AG04450 (cell line): ENCODE measurements at regions of chr3 and their contacts with region 1.

Region 1: GRCh38 chr3:114418724-114419543 is 125.1 kb downstream of the TIGIT start:
- DNase-seq: peak; percentile 87
- H3K4me3 ChIP-seq: no peak overlapping the region
- H3K27ac ChIP-seq: peak overlapping the region; percentile 42
- H3K27me3 ChIP-seq: no peaks in the 10 kb centered on the region
- CTCF ChIP-seq: peak; percentile 77

Region 2: DNA sequence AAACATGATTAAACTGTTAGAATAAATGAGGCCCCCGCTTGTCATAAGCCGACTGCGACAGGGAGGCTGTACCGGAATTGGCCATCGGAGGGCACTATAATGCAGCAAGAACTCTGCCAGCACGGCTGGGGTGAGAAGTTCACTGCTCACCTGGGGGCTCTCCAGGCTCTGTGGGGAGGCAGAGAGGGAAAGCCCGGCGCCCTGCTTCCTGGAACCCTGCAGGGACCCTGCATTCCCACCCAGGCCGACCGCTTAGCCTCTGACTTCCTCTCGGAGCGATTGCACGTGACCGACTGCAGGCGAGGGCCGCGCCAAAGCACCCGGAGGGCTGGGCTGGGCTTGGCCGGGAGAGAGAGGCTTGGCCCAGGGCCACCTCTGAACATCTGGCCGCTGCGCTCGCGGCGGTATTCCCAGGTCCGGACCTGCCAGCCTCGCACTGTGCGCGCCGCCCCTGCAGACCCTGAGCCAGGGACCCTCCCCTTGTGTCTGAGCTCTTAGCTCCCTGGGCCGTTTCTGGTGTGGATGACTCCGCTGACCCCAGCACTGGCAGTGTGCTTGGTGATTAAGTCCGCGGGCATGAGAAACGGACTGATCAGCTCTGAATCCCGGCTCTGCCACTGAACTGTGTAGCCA is 266.3 kb before region 1 on chr3:
- CTCF ChIA-PET with region 1: no interaction called
- POLR2A ChIA-PET with region 1: no interaction called
- DNase-seq: peak; percentile 26
- H3K4me3 ChIP-seq: peak overlapping the region; percentile 67
- H3K27ac ChIP-seq: peak overlapping the region; percentile 21
- H3K27me3 ChIP-seq: peaks cover 2% of the 10 kb centered on the region
- CTCF ChIP-seq: peak; percentile 96

Region 3: DNA sequence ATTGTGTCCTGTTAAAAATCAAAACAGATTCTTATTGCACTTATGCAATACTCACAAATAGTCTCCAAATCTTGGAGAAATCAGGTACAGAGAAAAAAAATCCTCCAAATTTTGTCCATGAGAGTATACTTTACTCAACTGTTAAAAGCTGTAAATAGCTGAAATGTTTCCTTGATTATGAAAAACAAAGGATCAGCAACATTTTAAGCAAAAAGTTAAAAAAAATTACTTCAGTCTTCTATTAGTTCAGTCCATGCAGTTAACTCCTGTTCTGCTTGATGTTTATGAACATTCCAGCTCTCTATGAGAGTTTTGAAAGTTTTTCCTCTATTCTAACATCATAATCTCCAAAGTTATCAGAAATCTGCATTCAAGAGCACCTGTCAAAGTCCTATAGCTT is 158.8 kb before region 1 on chr3:
- CTCF ChIA-PET with region 1: no interaction called
- POLR2A ChIA-PET with region 1: no interaction called
- DNase-seq: no peak
- H3K4me3 ChIP-seq: no peak overlapping the region
- H3K27ac ChIP-seq: no peak overlapping the region
- H3K27me3 ChIP-seq: no peaks in the 10 kb centered on the region
- CTCF ChIP-seq: no peak

Region 4: DNA sequence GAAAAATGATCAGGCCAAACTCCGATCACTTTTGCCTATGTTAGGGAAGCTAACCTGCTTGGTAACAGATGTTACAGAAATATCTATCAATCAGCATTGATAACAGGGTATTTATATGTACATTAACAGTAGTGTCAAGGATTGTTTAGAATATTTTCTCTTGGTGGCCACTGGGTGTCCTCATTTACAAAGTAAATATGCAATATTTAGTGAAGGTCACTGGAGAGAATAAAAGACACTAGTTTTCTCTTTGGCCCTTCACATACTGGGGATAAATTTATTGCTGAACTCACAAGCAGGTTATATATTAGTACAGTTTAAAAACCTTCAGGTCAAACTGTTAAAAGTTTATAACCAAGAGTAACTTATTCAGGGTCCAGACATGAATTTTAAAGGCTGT is 56.1 kb before region 1 on chr3:
- CTCF ChIA-PET with region 1: interaction called, 12 read pairs
- POLR2A ChIA-PET with region 1: no interaction called
- DNase-seq: no peak
- H3K4me3 ChIP-seq: no peak overlapping the region
- H3K27ac ChIP-seq: no peak overlapping the region
- H3K27me3 ChIP-seq: no peaks in the 10 kb centered on the region
- CTCF ChIP-seq: peak; percentile 51

Region 5: GRCh38 chr3:114393367-114394072 is 25.4 kb before region 1 on chr3:
- CTCF ChIA-PET with region 1: interaction called, 11 read pairs
- POLR2A ChIA-PET with region 1: no interaction called
- DNase-seq: no peak
- H3K4me3 ChIP-seq: no peak overlapping the region
- H3K27ac ChIP-seq: no peak overlapping the region
- H3K27me3 ChIP-seq: no peaks in the 10 kb centered on the region
- CTCF ChIP-seq: no peak

Region 6: DNA sequence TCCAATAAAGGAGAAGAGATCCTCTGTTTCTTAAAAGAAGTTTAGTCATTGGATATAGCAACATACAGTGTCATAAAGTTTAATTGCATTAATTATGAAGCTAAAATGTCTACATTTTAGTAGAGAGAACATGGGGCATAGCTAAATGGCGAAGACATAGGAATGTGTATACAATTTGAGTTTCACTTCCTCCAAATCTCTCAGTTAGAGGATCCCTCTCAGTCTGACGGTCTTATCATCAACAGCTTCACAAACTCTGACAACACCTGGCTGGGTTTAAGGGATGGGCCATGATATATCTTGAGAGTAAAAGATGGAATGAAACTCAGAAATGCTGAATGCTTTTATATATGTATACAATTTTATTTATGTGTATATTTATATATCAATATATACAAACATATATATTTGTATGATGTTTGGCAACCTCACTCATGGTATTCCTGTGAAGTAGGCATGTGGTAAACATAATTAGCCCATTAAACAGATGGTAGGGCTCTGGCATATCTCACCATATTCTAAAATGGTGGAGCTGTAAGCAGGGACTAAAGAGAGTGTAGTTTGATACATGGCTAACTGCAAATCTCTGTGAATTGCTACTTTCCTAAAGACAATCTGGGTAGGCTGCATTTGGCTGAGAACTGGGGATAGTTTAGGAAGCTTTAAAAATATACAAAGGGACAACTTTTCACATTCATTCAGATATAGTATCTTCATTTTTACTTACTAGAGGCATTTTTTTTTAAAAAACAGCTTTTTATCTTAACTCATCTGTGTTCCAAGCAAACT is 13.5 kb before region 1 on chr3:
- CTCF ChIA-PET with region 1: interaction called, 27 read pairs
- POLR2A ChIA-PET with region 1: no interaction called
- DNase-seq: no peak
- H3K4me3 ChIP-seq: no peak overlapping the region
- H3K27ac ChIP-seq: no peak overlapping the region
- H3K27me3 ChIP-seq: no peaks in the 10 kb centered on the region
- CTCF ChIP-seq: no peak

Region 7: DNA sequence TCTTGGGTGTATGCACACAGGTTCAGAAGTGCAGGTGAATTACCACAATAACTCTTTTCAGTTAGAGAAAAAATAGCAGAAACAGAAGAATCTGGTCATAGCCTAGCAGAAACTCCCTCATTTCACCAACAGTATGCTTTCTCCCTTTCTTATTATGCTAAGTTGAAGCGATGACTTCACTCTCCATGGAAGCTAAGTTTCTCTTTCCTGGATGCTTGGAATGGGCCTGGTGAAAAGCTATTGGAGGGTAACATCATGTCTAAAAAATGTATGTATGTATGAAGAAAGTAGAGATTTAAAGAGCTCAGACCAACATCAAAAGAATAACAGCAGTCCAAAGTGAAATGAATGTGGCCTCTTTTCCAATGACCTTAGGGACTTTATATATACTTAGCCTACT is 20.4 kb after region 1 on chr3:
- CTCF ChIA-PET with region 1: interaction called, 11 read pairs
- POLR2A ChIA-PET with region 1: no interaction called
- DNase-seq: peak; percentile 37
- H3K4me3 ChIP-seq: no peak overlapping the region
- H3K27ac ChIP-seq: no peak overlapping the region
- H3K27me3 ChIP-seq: no peaks in the 10 kb centered on the region
- CTCF ChIP-seq: no peak

Region 8: DNA sequence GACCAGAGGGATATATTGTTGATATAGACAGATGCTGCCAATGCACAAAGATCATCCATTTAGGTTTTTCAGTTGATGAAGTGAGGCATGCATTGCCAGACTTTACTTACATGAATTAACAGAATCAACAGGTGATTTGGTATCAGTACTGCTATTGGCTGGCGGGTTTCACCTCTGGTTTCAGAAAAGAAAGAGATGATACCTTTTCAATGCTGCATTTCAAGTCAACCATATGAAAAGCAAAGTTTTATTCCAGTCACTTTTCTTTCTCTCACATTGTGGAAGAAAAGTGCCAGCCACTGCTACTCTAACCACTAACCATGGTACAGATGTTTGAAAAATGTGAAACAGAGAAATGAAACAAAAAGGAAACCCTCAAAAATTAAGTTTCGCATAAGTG is 164.0 kb after region 1 on chr3:
- CTCF ChIA-PET with region 1: no interaction called
- POLR2A ChIA-PET with region 1: no interaction called
- DNase-seq: no peak
- H3K4me3 ChIP-seq: no peak overlapping the region
- H3K27ac ChIP-seq: no peak overlapping the region
- H3K27me3 ChIP-seq: no peaks in the 10 kb centered on the region
- CTCF ChIP-seq: no peak